Caco-2 (cell line): ENCODE measurements at regions of chr1 and their contacts with region 1.

Region 1: DNA sequence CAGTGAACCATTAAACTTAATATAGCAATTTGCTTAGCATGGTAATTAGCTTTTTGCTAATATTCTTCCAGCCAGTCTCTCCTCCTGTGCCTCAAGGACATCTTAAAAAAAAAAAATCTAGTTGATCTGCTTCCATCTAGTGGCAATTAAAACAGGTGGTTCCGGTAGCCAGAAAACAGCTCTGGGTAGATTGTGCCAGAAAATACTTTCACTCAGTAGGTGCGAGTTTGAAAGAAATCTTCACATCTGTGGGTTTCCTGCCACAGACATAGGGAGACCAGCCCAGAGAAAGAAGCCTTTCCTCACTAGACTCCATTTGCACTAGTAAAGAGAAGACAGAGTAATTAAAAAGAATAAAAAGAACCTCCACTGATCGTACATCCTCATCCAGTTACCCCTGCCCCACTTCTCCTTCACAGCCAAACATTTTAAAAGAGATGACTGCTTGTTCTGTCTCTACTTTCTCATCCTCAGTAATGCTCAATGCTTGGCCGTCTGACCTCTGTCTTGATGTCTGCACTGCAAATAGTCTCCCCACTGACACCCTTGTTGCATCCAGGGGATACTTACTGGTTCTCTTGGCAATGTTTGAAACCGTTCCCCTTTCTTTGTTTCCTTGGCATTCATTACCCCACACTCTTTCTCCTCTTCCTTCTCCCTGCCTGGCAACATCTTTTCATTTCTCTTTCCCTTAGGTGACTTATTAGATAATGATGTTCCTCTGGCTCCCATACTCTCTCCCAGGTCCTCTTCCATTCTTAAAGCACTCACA is 16.9 kb downstream of the SELL start:
- DNase-seq: no peak
- H3K4me3 ChIP-seq: no peak overlapping the region
- H3K4me3 Mint-ChIP-seq: no peak overlapping the region
- H3K27ac Mint-ChIP-seq: no peak overlapping the region
- H3K4me1 ChIP-seq: no peaks in the 10 kb centered on the region
- H3K4me1 Mint-ChIP-seq: no peaks in the 10 kb centered on the region
- H3K27me3 ChIP-seq: no peaks in the 10 kb centered on the region
- H3K27me3 Mint-ChIP-seq: peaks cover 3% of the 10 kb centered on the region
- CTCF ChIP-seq: no peak

Region 2: GRCh38 chr1:169601093-169601881 is 93.2 kb before region 1 on chr1:
- CTCF ChIA-PET with region 1: no interaction called
- POLR2A ChIA-PET with region 1: no interaction called
- intact Hi-C with region 1: no loop called
- DNase-seq: peak in 1 of 2 experiments; percentile 34
- H3K4me3 ChIP-seq: no peak overlapping the region
- H3K4me3 Mint-ChIP-seq: no peak overlapping the region
- H3K27ac Mint-ChIP-seq: no peak overlapping the region
- H3K4me1 ChIP-seq: no peaks in the 10 kb centered on the region
- H3K4me1 Mint-ChIP-seq: no peaks in the 10 kb centered on the region
- H3K27me3 ChIP-seq: no peaks in the 10 kb centered on the region; the same call in 1 of the 2 replicates
- H3K27me3 Mint-ChIP-seq: peaks cover 6% of the 10 kb centered on the region
- CTCF ChIP-seq: peak; percentile 35 to 41

Region 3: DNA sequence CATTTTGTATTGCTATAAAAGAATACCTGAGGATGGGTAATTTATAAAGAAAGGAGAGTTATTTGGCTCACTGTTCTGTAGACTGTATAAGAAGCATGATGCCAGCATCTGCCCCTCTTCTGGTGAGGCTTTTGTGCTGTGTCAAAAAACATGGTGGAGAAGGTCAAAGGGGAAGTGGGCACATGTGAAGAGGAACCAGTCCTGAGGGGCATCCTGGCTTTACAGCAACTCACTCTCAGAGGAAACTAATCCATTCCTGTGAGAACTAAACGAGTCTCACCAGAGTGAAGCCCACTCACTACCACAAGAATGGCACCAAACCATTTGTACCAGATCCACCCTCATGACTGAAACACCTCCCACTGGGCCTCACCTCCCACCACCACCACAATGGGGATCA is 45.8 kb before region 1 on chr1:
- CTCF ChIA-PET with region 1: no interaction called
- POLR2A ChIA-PET with region 1: interaction called, 11 read pairs
- intact Hi-C with region 1: no loop called
- DNase-seq: no peak
- H3K4me3 ChIP-seq: no peak overlapping the region
- H3K4me3 Mint-ChIP-seq: no peak overlapping the region
- H3K27ac Mint-ChIP-seq: no peak overlapping the region
- H3K4me1 ChIP-seq: no peaks in the 10 kb centered on the region
- H3K4me1 Mint-ChIP-seq: no peaks in the 10 kb centered on the region
- H3K27me3 ChIP-seq: no peaks in the 10 kb centered on the region
- H3K27me3 Mint-ChIP-seq: peaks cover 17% of the 10 kb centered on the region
- CTCF ChIP-seq: no peak

Region 4: DNA sequence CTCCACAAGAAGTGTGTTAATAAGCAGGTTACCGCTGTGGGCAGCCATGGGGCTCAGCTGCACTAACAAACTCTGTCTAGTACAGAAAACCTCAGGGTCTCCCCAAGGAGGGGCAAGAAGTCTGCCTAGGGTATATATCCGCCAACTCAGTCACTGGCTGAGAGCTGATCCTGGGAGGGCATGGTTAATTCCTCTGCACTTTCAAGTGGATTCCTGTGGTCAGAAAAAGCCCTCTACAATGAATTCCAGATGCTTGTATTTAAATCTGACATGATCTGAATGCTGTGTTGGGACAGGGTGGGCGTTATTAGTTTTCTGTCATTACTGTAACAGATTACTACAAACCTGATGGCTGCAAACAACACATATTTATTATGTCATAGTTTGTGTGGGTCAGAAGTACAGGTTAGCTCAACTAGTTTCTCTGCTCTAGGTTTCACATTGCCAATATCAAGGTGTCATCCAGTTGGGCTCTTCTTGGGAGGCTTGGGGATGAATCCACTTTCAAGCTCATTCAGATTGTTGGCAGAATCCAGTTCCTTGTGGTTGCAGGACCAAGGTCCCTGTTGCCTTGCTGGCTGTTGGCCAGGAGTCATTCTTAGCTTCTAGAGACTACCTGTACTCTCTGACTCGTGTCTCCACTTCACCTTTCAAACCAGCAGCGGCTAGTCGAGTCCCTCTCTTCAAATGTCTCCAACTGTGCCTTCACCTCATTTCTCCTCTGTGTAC is 47.3 kb after region 1 on chr1:
- CTCF ChIA-PET with region 1: interaction called, 13 read pairs
- POLR2A ChIA-PET with region 1: no interaction called
- intact Hi-C with region 1: no loop called
- DNase-seq: no peak
- H3K4me3 ChIP-seq: no peak overlapping the region
- H3K4me3 Mint-ChIP-seq: no peak overlapping the region
- H3K27ac Mint-ChIP-seq: no peak overlapping the region
- H3K4me1 ChIP-seq: no peaks in the 10 kb centered on the region
- H3K4me1 Mint-ChIP-seq: no peaks in the 10 kb centered on the region
- H3K27me3 ChIP-seq: no peaks in the 10 kb centered on the region
- H3K27me3 Mint-ChIP-seq: peaks cover 2% of the 10 kb centered on the region
- CTCF ChIP-seq: no peak